ENCODE measurements at regions of chr17 and their contacts with region 1.

Region 1: DNA sequence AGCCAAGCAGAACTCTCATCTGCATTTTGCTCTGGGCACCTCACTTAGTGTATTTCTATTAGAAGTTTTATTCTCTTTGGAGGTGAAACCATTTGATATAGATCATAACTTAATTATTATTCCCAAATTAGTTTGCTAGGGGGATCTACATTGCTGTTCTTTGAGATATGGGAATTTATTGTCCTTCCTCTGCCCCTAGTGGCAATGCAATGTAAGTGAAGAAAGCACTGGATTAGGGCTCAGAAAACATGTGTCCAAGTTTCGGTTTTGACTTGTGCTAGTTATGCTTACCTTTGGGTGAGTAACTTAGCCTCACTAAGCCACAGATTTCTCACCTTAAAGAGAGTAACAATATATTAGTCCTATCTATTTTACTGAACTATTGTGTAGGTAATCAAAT is 2.9 kb downstream of the KRT39 start:
- H3K4me3 ChIP-seq: no peak overlapping the region
- H3K27ac ChIP-seq: no peak overlapping the region
- H3K4me1 ChIP-seq: no peaks in the 10 kb centered on the region
- CTCF ChIP-seq: no peak

Region 2: DNA sequence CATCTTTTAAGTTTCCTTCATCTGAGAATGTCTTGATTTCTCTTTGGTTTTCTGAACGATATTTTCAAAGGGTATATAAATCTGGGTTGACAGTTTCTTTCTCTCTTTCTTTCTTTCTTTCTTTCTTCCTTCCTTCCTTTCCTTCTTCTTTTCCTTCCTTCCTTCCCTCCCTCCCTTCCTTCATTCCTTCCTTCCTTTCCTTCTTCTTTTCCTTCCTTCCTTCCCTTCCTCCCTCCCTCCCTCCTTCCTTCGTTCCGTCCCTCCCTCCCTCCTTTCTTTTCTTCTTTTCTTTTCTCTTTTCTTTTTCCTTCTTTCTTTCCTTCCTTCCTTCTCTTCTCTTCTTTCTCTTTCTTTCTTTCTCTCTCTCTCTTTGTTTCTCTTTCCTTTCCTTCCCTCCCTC is 10.5 kb after region 1 on chr17:
- CTCF ChIA-PET with region 1: interaction called, 12 read pairs
- POLR2A ChIA-PET with region 1: no interaction called
- H3K4me3 ChIP-seq: no peak overlapping the region
- H3K27ac ChIP-seq: no peak overlapping the region
- H3K4me1 ChIP-seq: no peaks in the 10 kb centered on the region
- CTCF ChIP-seq: no peak